Calu3 (cell line): ENCODE measurements at regions of chr1 and their contacts with region 1.

Region 1: DNA sequence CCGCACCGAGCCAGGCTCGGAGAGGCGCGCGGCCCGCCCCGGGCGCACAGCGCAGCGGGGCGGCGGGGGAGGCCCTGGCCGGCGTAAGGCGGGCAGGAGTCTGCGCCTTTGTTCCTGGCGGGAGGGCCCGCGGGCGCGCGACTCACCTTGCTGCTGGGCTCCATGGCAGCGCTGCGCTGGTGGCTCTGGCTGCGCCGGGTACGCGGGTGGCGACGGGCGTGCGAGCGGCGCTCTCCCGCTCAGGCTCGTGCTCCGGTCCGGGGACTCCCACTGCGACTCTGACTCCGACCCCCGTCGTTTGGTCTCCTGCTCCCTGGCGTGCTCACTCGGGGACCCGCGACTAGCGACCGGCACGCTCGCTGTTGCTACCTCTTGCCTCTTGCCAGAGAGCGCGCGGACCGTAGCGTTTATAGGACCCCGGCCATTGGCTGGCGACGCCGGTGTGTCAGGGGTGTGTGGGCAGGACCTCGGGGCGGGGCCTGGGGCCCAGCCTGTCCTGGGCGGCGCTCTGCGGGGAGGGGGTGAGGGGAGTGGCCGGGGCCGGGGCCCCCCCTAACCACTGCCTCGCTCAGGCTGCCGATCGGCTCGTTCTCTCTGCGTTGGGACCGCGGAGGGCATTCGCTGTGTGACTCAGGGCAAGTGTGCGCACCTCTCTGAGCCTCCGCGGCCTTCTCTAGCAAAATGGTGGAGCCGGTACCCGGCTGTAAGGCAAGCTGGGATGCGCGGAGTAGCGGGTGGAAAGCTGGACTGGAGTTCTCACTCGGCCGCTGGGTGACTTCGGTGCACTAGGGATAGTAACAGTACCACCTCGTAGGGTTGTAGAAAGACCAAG is at the start of gene SLC2A1:
- DNase-seq: peak; percentile 94
- H3K4me3 Mint-ChIP-seq: peak within 1 kb of the TSS; percentile 91
- H3K27ac Mint-ChIP-seq: peak within 1 kb of the TSS; percentile 97
- H3K4me1 Mint-ChIP-seq: peaks cover 41% of the 10 kb centered on the region
- H3K27me3 Mint-ChIP-seq: no peaks in the 10 kb centered on the region
- CTCF ChIP-seq: no peak
- total RNA-seq, gene SLC2A1: 163 and 183 TPM in 2 replicates

Region 2: GRCh38 chr1:42941640-42942330 is 16.9 kb before region 1 on chr1:
- CTCF ChIA-PET with region 1: interaction called, 9 read pairs
- intact Hi-C with region 1: loop called (anchors 2 kb)
- DNase-seq: peak; percentile 81
- H3K4me3 Mint-ChIP-seq: peak overlapping the region; percentile 64
- H3K27ac Mint-ChIP-seq: peak overlapping the region; percentile 98
- H3K4me1 Mint-ChIP-seq: peaks cover 92% of the 10 kb centered on the region
- H3K27me3 Mint-ChIP-seq: no peaks in the 10 kb centered on the region
- CTCF ChIP-seq: no peak

Region 3: GRCh38 chr1:42999308-42999707 is 40.6 kb after region 1 on chr1:
- CTCF ChIA-PET with region 1: no interaction called
- intact Hi-C with region 1: no loop called
- DNase-seq: no peak
- H3K4me3 Mint-ChIP-seq: no peak overlapping the region
- H3K27ac Mint-ChIP-seq: no peak overlapping the region
- H3K4me1 Mint-ChIP-seq: no peaks in the 10 kb centered on the region
- H3K27me3 Mint-ChIP-seq: no peaks in the 10 kb centered on the region
- CTCF ChIP-seq: no peak